Caco-2 (cell line): ENCODE measurements at regions of chr3 and their contacts with region 1.

Region 1: DNA sequence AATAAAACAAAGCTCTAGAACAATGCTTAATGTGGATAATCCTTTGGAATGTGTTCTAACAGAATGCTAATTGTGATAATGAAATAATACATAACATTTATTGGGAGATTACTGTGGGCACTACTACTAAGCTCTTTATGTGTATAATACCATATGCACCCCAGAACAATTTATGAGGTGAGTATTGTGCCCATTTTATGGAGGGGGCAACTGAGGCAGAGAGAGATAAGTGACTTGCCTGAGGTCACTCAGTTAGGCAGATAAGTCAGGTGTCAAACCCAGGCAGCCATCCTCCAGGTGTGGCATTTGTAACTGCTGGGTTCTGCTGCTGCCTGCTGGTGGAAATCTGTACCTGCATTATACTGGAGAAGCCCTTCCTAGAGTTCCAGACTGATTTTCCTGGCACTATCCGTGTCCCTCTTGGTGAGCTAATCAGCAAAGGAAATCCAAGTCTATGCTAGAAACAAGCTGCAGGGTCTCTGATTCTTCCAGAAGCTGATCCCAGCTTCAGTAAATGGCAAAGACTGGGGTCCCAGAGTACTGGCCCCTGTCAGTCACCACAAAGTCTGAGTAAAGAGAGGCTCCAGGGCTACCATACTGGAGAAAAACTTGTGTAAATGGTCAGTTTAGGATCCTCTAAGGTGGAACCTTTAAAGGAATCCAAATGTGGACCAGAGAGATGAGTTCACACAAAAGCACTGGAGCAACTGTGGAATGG is 22.6 kb upstream of the RBP1 start:
- DNase-seq: peak; percentile 66 to 67
- H3K4me3 ChIP-seq: no peak overlapping the region
- H3K4me3 Mint-ChIP-seq: no peak overlapping the region
- H3K27ac Mint-ChIP-seq: no peak overlapping the region
- H3K4me1 ChIP-seq: peaks cover 15% of the 10 kb centered on the region; the same call in 1 of the 2 replicates
- H3K4me1 Mint-ChIP-seq: peaks cover 26% of the 10 kb centered on the region
- H3K27me3 ChIP-seq: no peaks in the 10 kb centered on the region
- H3K27me3 Mint-ChIP-seq: no peaks in the 10 kb centered on the region
- CTCF ChIP-seq: peak; percentile 64 to 77

Region 2: DNA sequence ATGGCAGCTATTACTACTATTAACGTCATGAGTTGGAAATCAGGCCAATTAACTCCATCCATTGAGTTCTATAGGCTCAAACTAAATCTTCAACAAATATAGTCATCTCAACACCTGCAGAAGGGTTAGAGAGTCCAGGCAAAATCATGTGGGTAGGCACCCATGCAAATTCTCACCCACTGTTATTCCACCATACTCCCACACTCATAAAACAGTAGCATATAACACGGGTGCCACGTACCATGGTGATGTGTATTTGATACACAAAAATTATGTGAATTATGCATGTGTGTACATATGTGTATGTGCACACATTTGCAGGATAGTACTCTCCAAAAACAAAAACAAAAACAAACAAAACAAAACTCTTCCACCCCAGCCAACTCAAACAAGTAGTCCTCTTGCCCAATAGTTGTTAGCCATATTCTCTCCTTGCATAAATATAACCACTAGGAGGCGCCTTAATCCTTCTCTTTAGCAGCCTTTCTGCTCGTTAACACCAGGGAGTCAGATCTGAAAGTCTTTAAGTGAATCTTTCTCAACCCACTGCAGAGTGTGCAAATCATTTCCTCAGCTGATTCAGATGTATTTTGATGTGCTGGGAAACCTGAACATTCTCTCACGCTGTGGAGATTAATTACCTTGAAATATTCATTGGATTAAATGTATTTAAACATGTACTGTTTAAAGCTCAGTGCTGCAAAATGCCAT is 134.7 kb before region 1 on chr3:
- CTCF ChIA-PET with region 1: interaction called, 6 read pairs
- POLR2A ChIA-PET with region 1: no interaction called
- intact Hi-C with region 1: loop called (anchors 1 kb)
- DNase-seq: peak in 1 of 2 experiments; percentile 71
- H3K4me3 ChIP-seq: no peak overlapping the region
- H3K4me3 Mint-ChIP-seq: no peak overlapping the region
- H3K27ac Mint-ChIP-seq: no peak overlapping the region
- H3K4me1 ChIP-seq: no peaks in the 10 kb centered on the region
- H3K4me1 Mint-ChIP-seq: no peaks in the 10 kb centered on the region
- H3K27me3 ChIP-seq: no peaks in the 10 kb centered on the region
- H3K27me3 Mint-ChIP-seq: no peaks in the 10 kb centered on the region
- CTCF ChIP-seq: peak; percentile 68 to 76

Region 3: GRCh38 chr3:139506766-139507165 is 55.4 kb before region 1 on chr3:
- CTCF ChIA-PET with region 1: no interaction called
- POLR2A ChIA-PET with region 1: no interaction called
- intact Hi-C with region 1: loop called (anchors 5 kb)
- DNase-seq: peak in 1 of 2 experiments; percentile 37
- H3K4me3 ChIP-seq: no peak overlapping the region
- H3K4me3 Mint-ChIP-seq: no peak overlapping the region
- H3K27ac Mint-ChIP-seq: no peak overlapping the region
- H3K4me1 ChIP-seq: peaks cover 16% of the 10 kb centered on the region; the same call in 1 of the 2 replicates
- H3K4me1 Mint-ChIP-seq: peaks cover 21% of the 10 kb centered on the region
- H3K27me3 ChIP-seq: no peaks in the 10 kb centered on the region
- H3K27me3 Mint-ChIP-seq: no peaks in the 10 kb centered on the region
- CTCF ChIP-seq: peak in 1 of 2 experiments; percentile 47

Region 4: GRCh38 chr3:139519998-139520737 is 42.0 kb before region 1 on chr3:
- CTCF ChIA-PET with region 1: interaction called, 3 read pairs
- POLR2A ChIA-PET with region 1: no interaction called
- intact Hi-C with region 1: loop called (anchors 2 kb)
- DNase-seq: peak; percentile 53 to 68
- H3K4me3 ChIP-seq: no peak overlapping the region
- H3K4me3 Mint-ChIP-seq: no peak overlapping the region
- H3K27ac Mint-ChIP-seq: no peak overlapping the region
- H3K4me1 ChIP-seq: no peaks in the 10 kb centered on the region
- H3K4me1 Mint-ChIP-seq: no peaks in the 10 kb centered on the region
- H3K27me3 ChIP-seq: no peaks in the 10 kb centered on the region
- H3K27me3 Mint-ChIP-seq: no peaks in the 10 kb centered on the region
- CTCF ChIP-seq: peak; percentile 40 to 51

Region 5: GRCh38 chr3:139629033-139629432 is 66.9 kb after region 1 on chr3:
- CTCF ChIA-PET with region 1: no interaction called
- POLR2A ChIA-PET with region 1: no interaction called
- intact Hi-C with region 1: no loop called
- DNase-seq: peak; percentile 61 to 67
- H3K4me3 ChIP-seq: no peak overlapping the region
- H3K4me3 Mint-ChIP-seq: no peak overlapping the region
- H3K27ac Mint-ChIP-seq: peak overlapping the region; percentile 67
- H3K4me1 ChIP-seq: peaks cover 18% of the 10 kb centered on the region
- H3K4me1 Mint-ChIP-seq: peaks cover 18% of the 10 kb centered on the region
- H3K27me3 ChIP-seq: no peaks in the 10 kb centered on the region
- H3K27me3 Mint-ChIP-seq: no peaks in the 10 kb centered on the region
- CTCF ChIP-seq: peak; percentile 25 to 64

Region 6: GRCh38 chr3:140051019-140051957 is 489.2 kb after region 1 on chr3:
- CTCF ChIA-PET with region 1: no interaction called
- POLR2A ChIA-PET with region 1: no interaction called
- intact Hi-C with region 1: loop called (anchors 1 kb)
- DNase-seq: peak in 1 of 2 experiments; percentile 34
- H3K4me3 ChIP-seq: no peak overlapping the region
- H3K4me3 Mint-ChIP-seq: no peak overlapping the region
- H3K27ac Mint-ChIP-seq: peak overlapping the region; percentile 50
- H3K4me1 ChIP-seq: peaks cover 41% of the 10 kb centered on the region
- H3K4me1 Mint-ChIP-seq: peaks cover 34% of the 10 kb centered on the region
- H3K27me3 ChIP-seq: no peaks in the 10 kb centered on the region
- H3K27me3 Mint-ChIP-seq: no peaks in the 10 kb centered on the region
- CTCF ChIP-seq: peak in 1 of 2 experiments; percentile 54